Spleen (tissue), 13 donors: ENCODE measurements at regions of chr7 and their contacts with region 1.

Region 1: GRCh38 chr7:43582503-43583423 is at the start of gene STK17A:
- DNase-seq: peak; percentile 100
- H3K4me3 ChIP-seq: peak within 1 kb of the TSS; percentile 79 to 98 (median 91)
- H3K27ac ChIP-seq: peak within 1 kb of the TSS; percentile 85 to 100 (median 99)
- H3K4me1 ChIP-seq: peaks cover 19 to 44% (median 38%) of the 10 kb centered on the region in 6 donors
- H3K27me3 ChIP-seq: peaks cover 0 to 9% (median 0%) of the 10 kb centered on the region in 7 donors
- CTCF ChIP-seq: peak; percentile 97 to 100 (median 100)
- POLR2A ChIP-seq: peak; percentile 44 to 92 (median 86)
- total RNA-seq, gene STK17A: 45.5 to 70.1 (median 63.8) TPM

Region 2: DNA sequence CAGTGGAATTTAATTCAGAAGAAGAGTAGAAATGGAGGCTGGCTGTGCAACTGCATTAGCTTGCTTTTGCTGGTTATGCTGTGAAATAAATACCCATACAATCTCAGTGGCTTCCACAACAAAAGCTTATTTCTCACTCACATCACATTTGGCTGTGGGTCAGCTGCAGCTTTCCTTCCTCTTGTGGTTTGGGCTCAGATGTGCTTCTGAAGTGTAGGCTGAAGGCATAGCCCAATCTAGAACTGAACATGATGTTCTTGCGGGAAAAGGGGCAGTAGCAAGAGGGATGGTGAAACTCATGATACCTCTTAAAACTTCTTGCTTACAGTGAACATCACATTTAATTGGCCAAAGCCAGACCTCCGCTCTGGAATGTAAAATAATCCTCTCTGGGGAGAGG is 350.4 kb before region 1 on chr7:
- intact Hi-C with region 1: no loop called
- DNase-seq: no peak
- H3K4me3 ChIP-seq: no peak overlapping the region
- H3K27ac ChIP-seq: no peak overlapping the region
- H3K4me1 ChIP-seq: no peaks in the 10 kb centered on the region
- H3K27me3 ChIP-seq: peaks cover 0 to 18% (median 0%) of the 10 kb centered on the region in 7 donors
- CTCF ChIP-seq: no peak
- POLR2A ChIP-seq: no peak

Region 3: GRCh38 chr7:43639858-43640491 is 57.2 kb after region 1 on chr7:
- intact Hi-C with region 1: loop called (anchors 10 kb)
- DNase-seq: no peak
- H3K4me3 ChIP-seq: no peak overlapping the region
- H3K27ac ChIP-seq: peak overlapping the region; percentile 22 to 97 (median 81)
- H3K4me1 ChIP-seq: peaks cover 19 to 98% (median 76%) of the 10 kb centered on the region in 6 donors
- H3K27me3 ChIP-seq: no peaks in the 10 kb centered on the region
- CTCF ChIP-seq: no peak
- POLR2A ChIP-seq: no peak

Region 4: DNA sequence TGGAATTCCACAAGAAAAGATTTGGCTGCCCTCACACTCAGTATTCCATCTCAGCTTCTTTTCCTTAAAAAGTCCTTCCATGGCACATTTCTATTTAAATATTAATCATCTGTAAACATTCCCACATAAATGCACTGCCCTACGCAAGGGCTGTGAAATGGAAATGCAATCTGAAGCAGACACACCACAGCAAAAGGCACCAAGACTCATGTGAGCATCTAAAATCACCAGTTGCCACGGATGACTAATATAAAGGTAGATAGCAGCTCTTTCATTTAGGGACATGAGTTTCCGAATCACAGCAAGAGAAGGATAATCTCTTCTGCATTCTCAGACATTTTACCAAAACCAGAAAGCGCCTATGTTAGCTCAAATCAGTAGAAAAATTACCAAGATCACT is 114.9 kb after region 1 on chr7:
- intact Hi-C with region 1: loop called (anchors 2 kb)
- DNase-seq: no peak
- H3K4me3 ChIP-seq: no peak overlapping the region
- H3K27ac ChIP-seq: no peak overlapping the region
- H3K4me1 ChIP-seq: peaks cover 8 to 66% (median 24%) of the 10 kb centered on the region in 6 donors
- H3K27me3 ChIP-seq: no peaks in the 10 kb centered on the region
- CTCF ChIP-seq: no peak
- POLR2A ChIP-seq: no peak

Region 5: GRCh38 chr7:43834463-43835251 is 251.9 kb after region 1 on chr7:
- intact Hi-C with region 1: loop called (anchors 10 kb)
- DNase-seq: no peak
- H3K4me3 ChIP-seq: peak overlapping the region; percentile 2 to 67 (median 32)
- H3K27ac ChIP-seq: peak overlapping the region; percentile 4 to 76 (median 52)
- H3K4me1 ChIP-seq: peaks cover 6 to 31% (median 18%) of the 10 kb centered on the region in 6 donors
- H3K27me3 ChIP-seq: peaks cover 0 to 4% (median 0%) of the 10 kb centered on the region in 7 donors
- CTCF ChIP-seq: no peak
- POLR2A ChIP-seq: no peak